Naive thymus-derived CD8-positive, alpha-beta T cell (primary cell): ENCODE measurements at regions of chr12 and their contacts with region 1.

Region 1: GRCh38 chr12:57846577-57847319 is at the start of gene CTDSP2:
- DNase-seq: peak; percentile 71 to 95 (median 81)
- ATAC-seq: peak; percentile 39 to 41
- H3K4me3 Mint-ChIP-seq: peak within 1 kb of the TSS; percentile 82 to 96 (median 86)
- H3K27ac Mint-ChIP-seq: peak within 1 kb of the TSS; percentile 89 to 99 (median 90)
- H3K4me1 Mint-ChIP-seq: peaks cover 30 to 52% (median 45%) of the 10 kb centered on the region in 4 donors
- H3K27me3 Mint-ChIP-seq: peaks cover 0 to 5% (median 0%) of the 10 kb centered on the region in 5 donors
- polyA plus RNA-seq, gene CTDSP2: 51.4 to 81.2 (median 71.5) TPM

Region 2: GRCh38 chr12:57782608-57783465 is 63.9 kb before region 1 on chr12 and contains the start of gene TSFM:
- POLR2A ChIA-PET with region 1: interaction called, 17 read pairs
- DNase-seq: peak; percentile 89 to 98 (median 96)
- ATAC-seq: peak; percentile 87 to 92
- H3K4me3 Mint-ChIP-seq: peak within 1 kb of the TSS; percentile 99 to 100 (median 99)
- H3K27ac Mint-ChIP-seq: peak within 1 kb of the TSS; percentile 97 to 100 (median 99)
- H3K4me1 Mint-ChIP-seq: peaks cover 30 to 55% (median 48%) of the 10 kb centered on the region in 4 donors
- H3K27me3 Mint-ChIP-seq: peaks cover 0 to 4% (median 0%) of the 10 kb centered on the region in 5 donors
- polyA plus RNA-seq, gene TSFM: 25.5 to 31.0 (median 28.3) TPM

Region 3: GRCh38 chr12:57836442-57837375 is 10.0 kb before region 1 on chr12:
- POLR2A ChIA-PET with region 1: interaction called, 84 read pairs
- DNase-seq: peak in 6 of 10 donors; percentile 21 to 46 (median 32)
- ATAC-seq: peak; percentile 27 to 40
- H3K4me3 Mint-ChIP-seq: peak overlapping the region; percentile 55 to 87 (median 78)
- H3K27ac Mint-ChIP-seq: peak overlapping the region; percentile 88 to 99 (median 94)
- H3K4me1 Mint-ChIP-seq: peaks cover 58 to 97% (median 95%) of the 10 kb centered on the region in 4 donors
- H3K27me3 Mint-ChIP-seq: no peaks in the 10 kb centered on the region

Region 4: GRCh38 chr12:57865090-57865751 is 18.5 kb after region 1 on chr12:
- POLR2A ChIA-PET with region 1: interaction called, 17 read pairs
- DNase-seq: peak in 3 of 10 donors; percentile 12 to 36 (median 31)
- ATAC-seq: peak; percentile 81 to 91
- H3K4me3 Mint-ChIP-seq: peak overlapping the region; percentile 65 to 94 (median 86)
- H3K27ac Mint-ChIP-seq: peak overlapping the region in 5 of 10 donors; percentile 47 to 91 (median 66)
- H3K4me1 Mint-ChIP-seq: peaks cover 5 to 11% (median 7%) of the 10 kb centered on the region in 4 donors
- H3K27me3 Mint-ChIP-seq: peaks cover 8 to 37% (median 20%) of the 10 kb centered on the region in 5 donors

Region 5: GRCh38 chr12:57899010-57899662 is 52.4 kb after region 1 on chr12:
- POLR2A ChIA-PET with region 1: interaction called, 28 read pairs
- DNase-seq: peak; percentile 39 to 81 (median 66)
- ATAC-seq: peak; percentile 85 to 92
- H3K4me3 Mint-ChIP-seq: peak overlapping the region; percentile 12 to 87 (median 78)
- H3K27ac Mint-ChIP-seq: peak overlapping the region; percentile 89 to 97 (median 95)
- H3K4me1 Mint-ChIP-seq: peaks cover 32 to 54% (median 52%) of the 10 kb centered on the region in 4 donors
- H3K27me3 Mint-ChIP-seq: no peaks in the 10 kb centered on the region

Region 6: DNA sequence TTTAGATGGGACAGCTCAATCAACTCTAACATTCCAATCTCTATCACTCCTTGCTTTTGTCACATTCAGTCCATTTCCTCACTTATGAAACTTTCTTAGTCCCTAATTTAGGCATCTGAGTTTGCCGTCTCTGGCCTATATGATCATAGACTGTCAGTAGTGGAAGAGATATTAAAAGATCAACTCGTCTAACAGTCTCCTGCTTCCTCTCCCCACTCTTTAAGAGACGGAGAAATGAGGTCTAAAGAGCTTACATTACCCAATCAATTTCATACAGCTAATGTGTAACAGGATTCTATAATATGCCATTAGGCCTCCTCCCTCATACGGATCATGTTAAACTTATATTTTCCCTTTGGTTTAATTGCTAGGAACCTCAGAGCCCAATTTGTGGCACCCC is 88.1 kb after region 1 on chr12:
- POLR2A ChIA-PET with region 1: no interaction called
- DNase-seq: no peak
- ATAC-seq: no peak
- H3K4me3 Mint-ChIP-seq: peak overlapping the region in 7 of 10 donors; percentile 41 to 99 (median 96)
- H3K27ac Mint-ChIP-seq: peak overlapping the region in 9 of 10 donors; percentile 6 to 100 (median 99)
- H3K4me1 Mint-ChIP-seq: peaks cover 8 to 30% (median 26%) of the 10 kb centered on the region in 4 donors
- H3K27me3 Mint-ChIP-seq: no peaks in the 10 kb centered on the region